CD4-positive, alpha-beta T cell (primary cell): ENCODE measurements at regions of chr1 and their contacts with region 1.

Region 1: GRCh38 chr1:108877348-108878159 is 769 bp downstream of the GPSM2 start:
- DNase-seq: peak in 1 of 14 experiments; percentile 6
- ATAC-seq: no peak
- H3K4me3 ChIP-seq: peak overlapping the region; percentile 75
- H3K4me3 Mint-ChIP-seq: peak overlapping the region; percentile 95
- H3K27ac ChIP-seq: no peak overlapping the region
- H3K27ac Mint-ChIP-seq: peak overlapping the region; percentile 1
- H3K4me1 ChIP-seq: peaks cover 16% of the 10 kb centered on the region
- H3K4me1 Mint-ChIP-seq: peaks cover 10% of the 10 kb centered on the region
- H3K27me3 ChIP-seq: peaks cover 0 to 6% of the 10 kb centered on the region in 2 experiments
- H3K27me3 Mint-ChIP-seq: no peaks in the 10 kb centered on the region
- CTCF ChIP-seq: no peak

Region 2: GRCh38 chr1:108079440-108080025 is 798.0 kb before region 1 on chr1:
- CTCF ChIA-PET with region 1: no interaction called
- POLR2A ChIA-PET with region 1: no interaction called
- intact Hi-C with region 1: no loop called
- DNase-seq: peak; percentile 15 to 80 (median 48)
- ATAC-seq: peak; percentile 75
- H3K4me3 ChIP-seq: no peak overlapping the region
- H3K4me3 Mint-ChIP-seq: peak overlapping the region; percentile 43
- H3K27ac ChIP-seq: peak overlapping the region; percentile 39 to 73
- H3K27ac Mint-ChIP-seq: peak overlapping the region; percentile 79
- H3K4me1 ChIP-seq: peaks cover 48% of the 10 kb centered on the region
- H3K4me1 Mint-ChIP-seq: peaks cover 79% of the 10 kb centered on the region
- H3K27me3 ChIP-seq: no peaks in the 10 kb centered on the region
- H3K27me3 Mint-ChIP-seq: no peaks in the 10 kb centered on the region
- CTCF ChIP-seq: no peak

Region 3: GRCh38 chr1:108816049-108816893 is 61.3 kb before region 1 on chr1:
- CTCF ChIA-PET with region 1: no interaction called
- POLR2A ChIA-PET with region 1: no interaction called
- intact Hi-C with region 1: no loop called
- DNase-seq: no peak
- ATAC-seq: no peak
- H3K4me3 ChIP-seq: no peak overlapping the region
- H3K4me3 Mint-ChIP-seq: no peak overlapping the region
- H3K27ac ChIP-seq: no peak overlapping the region
- H3K27ac Mint-ChIP-seq: no peak overlapping the region
- H3K4me1 ChIP-seq: no peaks in the 10 kb centered on the region
- H3K4me1 Mint-ChIP-seq: no peaks in the 10 kb centered on the region
- H3K27me3 ChIP-seq: no peaks in the 10 kb centered on the region
- H3K27me3 Mint-ChIP-seq: no peaks in the 10 kb centered on the region
- CTCF ChIP-seq: no peak

Region 4: GRCh38 chr1:109201123-109201703 is 323.7 kb after region 1 on chr1:
- CTCF ChIA-PET with region 1: no interaction called
- POLR2A ChIA-PET with region 1: interaction called, 3 read pairs
- intact Hi-C with region 1: loop called in 1 of 2 experiments (anchors 10 kb)
- DNase-seq: peak in 7 of 14 experiments; percentile 5 to 44 (median 27)
- ATAC-seq: no peak
- H3K4me3 ChIP-seq: no peak overlapping the region
- H3K4me3 Mint-ChIP-seq: no peak overlapping the region
- H3K27ac ChIP-seq: no peak overlapping the region
- H3K27ac Mint-ChIP-seq: no peak overlapping the region
- H3K4me1 ChIP-seq: peaks cover 11% of the 10 kb centered on the region
- H3K4me1 Mint-ChIP-seq: peaks cover 17% of the 10 kb centered on the region
- H3K27me3 ChIP-seq: no peaks in the 10 kb centered on the region
- H3K27me3 Mint-ChIP-seq: no peaks in the 10 kb centered on the region
- CTCF ChIP-seq: no peak

Region 5: GRCh38 chr1:109263597-109264398 is 386.2 kb after region 1 on chr1:
- CTCF ChIA-PET with region 1: no interaction called
- POLR2A ChIA-PET with region 1: no interaction called
- intact Hi-C with region 1: no loop called
- DNase-seq: peak; percentile 62 to 87 (median 71)
- ATAC-seq: peak; percentile 97
- H3K4me3 ChIP-seq: no peak overlapping the region
- H3K4me3 Mint-ChIP-seq: no peak overlapping the region
- H3K27ac ChIP-seq: no peak overlapping the region
- H3K27ac Mint-ChIP-seq: no peak overlapping the region
- H3K4me1 ChIP-seq: peaks cover 6% of the 10 kb centered on the region
- H3K4me1 Mint-ChIP-seq: no peaks in the 10 kb centered on the region
- H3K27me3 ChIP-seq: no peaks in the 10 kb centered on the region
- H3K27me3 Mint-ChIP-seq: no peaks in the 10 kb centered on the region
- CTCF ChIP-seq: peak; percentile 83